Astrocyte of the cerebellum (primary cell): ENCODE measurements at regions of chr2 and their contacts with region 1.

Region 1: DNA sequence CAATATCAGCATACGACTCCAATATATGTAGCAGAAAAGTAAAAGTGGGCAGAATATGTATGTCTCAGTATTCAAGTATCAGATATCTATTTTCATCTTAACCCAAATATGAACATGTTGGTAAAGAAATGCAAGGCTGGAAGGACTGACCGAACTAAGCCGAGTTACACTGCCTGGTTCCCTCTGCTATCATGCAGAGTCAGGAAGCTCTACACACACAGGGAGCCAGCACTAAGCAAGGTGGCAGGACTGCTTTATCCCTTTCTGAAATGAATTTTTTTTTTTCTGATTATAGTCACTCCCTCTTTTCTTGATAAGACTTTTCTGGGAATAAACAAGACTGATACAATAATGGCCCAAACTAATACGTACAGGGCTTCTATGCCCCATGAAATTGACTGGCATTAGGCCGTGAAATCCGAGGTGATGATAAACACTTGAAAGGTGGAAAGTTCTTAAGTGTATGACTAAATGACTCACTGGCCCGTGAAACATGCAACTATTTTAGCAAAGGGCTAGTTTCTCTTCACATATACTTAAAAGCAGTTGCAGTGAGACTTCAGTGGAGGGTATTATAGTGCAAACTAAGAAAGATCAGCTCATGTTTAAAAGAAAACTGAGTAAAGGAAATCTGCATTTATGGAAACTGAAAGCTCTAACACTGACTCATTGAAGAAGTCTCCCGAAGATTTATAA is 14.9 kb downstream of the DPP4 start:
- DNase-seq: no peak
- H3K4me3 ChIP-seq: no peak overlapping the region
- CTCF ChIP-seq: no peak

Region 2: DNA sequence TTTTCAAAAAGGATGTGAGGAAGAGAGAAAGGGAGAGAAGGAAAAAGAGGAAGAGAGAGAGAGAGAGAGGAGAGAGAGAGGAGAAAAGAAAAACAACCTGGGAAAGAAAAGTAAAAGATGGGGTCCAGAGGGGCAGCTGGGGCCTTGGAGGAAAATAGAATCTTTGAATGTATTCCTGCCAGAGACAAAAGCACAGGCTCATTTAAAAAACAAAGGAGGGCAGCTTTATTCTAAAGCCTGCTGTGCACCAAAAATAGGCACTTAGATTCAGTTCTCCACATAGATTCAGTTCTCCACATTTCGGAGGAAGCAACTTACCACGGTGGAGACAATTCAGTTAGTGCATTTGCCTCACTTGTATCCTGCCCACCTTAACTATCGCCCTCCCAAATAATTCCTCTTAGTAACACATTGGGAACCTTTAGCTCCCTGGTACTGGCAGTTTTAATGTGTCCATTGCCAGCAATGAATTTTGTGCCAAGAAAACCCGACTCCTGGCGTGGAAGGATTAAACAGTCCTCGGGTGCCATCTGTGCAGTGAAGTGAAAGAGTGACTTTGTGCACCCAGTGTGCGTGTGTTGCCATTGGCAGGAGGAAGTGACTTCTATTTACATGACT is 56.4 kb before region 1 on chr2:
- in situ Hi-C with region 1: no loop called
- DNase-seq: no peak
- H3K4me3 ChIP-seq: no peak overlapping the region
- CTCF ChIP-seq: no peak

Region 3: GRCh38 chr2:162091325-162092007 is 32.3 kb after region 1 on chr2:
- in situ Hi-C with region 1: loop called (anchors 5 kb)
- DNase-seq: no peak
- H3K4me3 ChIP-seq: no peak overlapping the region
- CTCF ChIP-seq: no peak